B cell (primary cell): ENCODE measurements at regions of chr5 and their contacts with region 1.

Region 1: GRCh38 chr5:10283927-10284635 is 23.6 kb downstream of the CMBL start:
- DNase-seq: peak; percentile 81
- ATAC-seq: peak; percentile 97
- H3K4me3 ChIP-seq: no peak overlapping the region
- H3K4me3 Mint-ChIP-seq: no peak overlapping the region
- H3K27ac ChIP-seq: no peak overlapping the region
- H3K27ac Mint-ChIP-seq: no peak overlapping the region
- H3K4me1 ChIP-seq: peaks cover 4 to 15% of the 10 kb centered on the region in 2 donors
- H3K4me1 Mint-ChIP-seq: peaks cover 12% of the 10 kb centered on the region
- H3K27me3 ChIP-seq: peaks cover 0 to 3% (median 0%) of the 10 kb centered on the region in 4 experiments
- H3K27me3 Mint-ChIP-seq: peaks cover 12% of the 10 kb centered on the region
- CTCF ChIP-seq: peak; percentile 98

Region 2: GRCh38 chr5:9632495-9632894 is 651.6 kb before region 1 on chr5:
- CTCF ChIA-PET with region 1: no interaction called
- POLR2A ChIA-PET with region 1: no interaction called
- intact Hi-C with region 1: no loop called
- DNase-seq: no peak
- ATAC-seq: no peak
- H3K4me3 ChIP-seq: no peak overlapping the region
- H3K4me3 Mint-ChIP-seq: no peak overlapping the region
- H3K27ac ChIP-seq: no peak overlapping the region
- H3K27ac Mint-ChIP-seq: no peak overlapping the region
- H3K4me1 ChIP-seq: no peaks in the 10 kb centered on the region
- H3K4me1 Mint-ChIP-seq: no peaks in the 10 kb centered on the region
- H3K27me3 ChIP-seq: no peaks in the 10 kb centered on the region
- H3K27me3 Mint-ChIP-seq: no peaks in the 10 kb centered on the region
- CTCF ChIP-seq: no peak

Region 3: GRCh38 chr5:10064546-10065195 is 219.4 kb before region 1 on chr5:
- CTCF ChIA-PET with region 1: no interaction called
- POLR2A ChIA-PET with region 1: no interaction called
- intact Hi-C with region 1: no loop called
- DNase-seq: no peak
- ATAC-seq: no peak
- H3K4me3 ChIP-seq: no peak overlapping the region
- H3K4me3 Mint-ChIP-seq: no peak overlapping the region
- H3K27ac ChIP-seq: no peak overlapping the region
- H3K27ac Mint-ChIP-seq: no peak overlapping the region
- H3K4me1 ChIP-seq: no peaks in the 10 kb centered on the region
- H3K4me1 Mint-ChIP-seq: no peaks in the 10 kb centered on the region
- H3K27me3 ChIP-seq: no peaks in the 10 kb centered on the region
- H3K27me3 Mint-ChIP-seq: no peaks in the 10 kb centered on the region
- CTCF ChIP-seq: no peak

Region 4: DNA sequence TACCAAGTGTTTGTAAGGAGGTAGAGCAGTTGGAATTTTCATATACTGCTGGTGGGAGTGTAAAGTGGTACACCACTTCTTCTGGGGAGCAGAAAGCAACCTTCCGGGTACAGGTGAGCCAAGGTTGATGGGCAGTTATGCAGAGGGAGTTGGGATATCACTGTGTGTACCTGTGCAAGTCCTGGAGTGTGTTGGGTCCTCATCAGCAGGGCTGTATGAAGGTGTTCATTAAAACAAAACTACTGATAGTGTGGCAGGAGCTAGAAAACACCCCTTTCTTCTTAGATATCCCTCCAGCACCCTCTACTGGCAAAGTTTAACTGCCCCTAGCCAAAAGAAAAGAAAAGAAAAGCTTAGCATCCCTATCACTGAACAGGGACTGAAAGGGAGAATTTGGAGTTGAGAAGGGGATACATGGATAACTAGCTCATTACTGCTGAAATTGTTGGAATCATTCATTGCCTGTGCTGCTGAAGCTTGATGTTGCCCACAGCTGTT is 80.2 kb after region 1 on chr5:
- CTCF ChIA-PET with region 1: interaction called, 39 read pairs
- POLR2A ChIA-PET with region 1: no interaction called
- intact Hi-C with region 1: loop called (anchors 2 kb)
- DNase-seq: peak; percentile 46
- ATAC-seq: no peak
- H3K4me3 ChIP-seq: no peak overlapping the region
- H3K4me3 Mint-ChIP-seq: no peak overlapping the region
- H3K27ac ChIP-seq: no peak overlapping the region
- H3K27ac Mint-ChIP-seq: peak overlapping the region; percentile 53
- H3K4me1 ChIP-seq: peaks cover 42 to 45% of the 10 kb centered on the region in 2 donors
- H3K4me1 Mint-ChIP-seq: peaks cover 79% of the 10 kb centered on the region
- H3K27me3 ChIP-seq: no peaks in the 10 kb centered on the region
- H3K27me3 Mint-ChIP-seq: no peaks in the 10 kb centered on the region
- CTCF ChIP-seq: peak; percentile 55

Region 5: DNA sequence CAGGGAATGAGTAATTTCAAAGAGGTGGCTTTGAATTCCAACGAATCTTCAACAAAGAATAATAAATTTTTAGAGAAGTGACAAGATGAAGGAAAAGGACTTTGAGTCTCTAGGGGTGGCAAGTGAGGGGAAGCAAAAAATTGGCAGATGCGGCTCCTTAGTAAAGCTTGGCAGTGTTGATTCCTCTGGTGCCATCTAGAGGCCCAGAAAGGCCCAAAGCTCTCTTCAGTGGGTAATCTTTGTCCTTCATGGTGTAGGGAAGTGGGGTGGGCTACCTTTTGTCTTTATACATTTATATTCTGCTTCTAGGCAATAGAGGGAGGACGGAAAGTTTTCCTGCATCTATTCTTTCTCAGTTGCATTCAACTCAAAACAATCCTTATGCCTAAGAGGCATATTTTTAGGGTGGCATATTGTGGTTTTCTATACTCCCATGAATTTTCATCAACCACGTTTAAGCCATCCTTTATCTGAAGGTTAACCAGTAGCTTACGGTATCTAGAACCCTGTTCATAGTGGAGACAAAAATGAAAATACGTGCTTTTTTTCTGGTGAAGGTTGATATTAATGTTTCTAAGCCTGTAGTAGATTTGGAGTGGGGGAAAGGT is 140.1 kb after region 1 on chr5:
- CTCF ChIA-PET with region 1: interaction called, 41 read pairs
- POLR2A ChIA-PET with region 1: no interaction called
- intact Hi-C with region 1: no loop called
- DNase-seq: peak; percentile 53
- ATAC-seq: peak; percentile 45
- H3K4me3 ChIP-seq: no peak overlapping the region
- H3K4me3 Mint-ChIP-seq: no peak overlapping the region
- H3K27ac ChIP-seq: no peak overlapping the region
- H3K27ac Mint-ChIP-seq: no peak overlapping the region
- H3K4me1 ChIP-seq: peaks cover 4 to 8% of the 10 kb centered on the region in 2 donors
- H3K4me1 Mint-ChIP-seq: peaks cover 26% of the 10 kb centered on the region
- H3K27me3 ChIP-seq: no peaks in the 10 kb centered on the region
- H3K27me3 Mint-ChIP-seq: no peaks in the 10 kb centered on the region
- CTCF ChIP-seq: peak; percentile 55